A549 (cell line): ENCODE measurements at regions of chr12 and their contacts with region 1.

Region 1: GRCh38 chr12:110888256-110888991 is 32.0 kb downstream of the MYL2 start:
- DNase-seq: no peak
- ATAC-seq: no peak
- H3K4me3 ChIP-seq: no peak overlapping the region; the same call in 2 of the 3 replicates
- H3K27ac ChIP-seq: no peak overlapping the region
- H3K4me1 ChIP-seq: peaks cover 9% of the 10 kb centered on the region; the same call in 2 of the 3 replicates
- CTCF ChIP-seq: no peak; the same call in 2 of the 3 replicates
- EP300 ChIP-seq: no peak
- POLR2A ChIP-seq: no peak
- RAD21 ChIP-seq: peak in 1 of 2 experiments; percentile 5; a peak in 1 of 5 replicates

Region 2: GRCh38 chr12:110807640-110808039 is 80.8 kb before region 1 on chr12:
- CTCF ChIA-PET with region 1: no interaction called
- POLR2A ChIA-PET with region 1: no interaction called
- DNase-seq: no peak
- ATAC-seq: no peak
- H3K4me3 ChIP-seq: no peak overlapping the region
- H3K27ac ChIP-seq: no peak overlapping the region
- H3K4me1 ChIP-seq: no peaks in the 10 kb centered on the region
- CTCF ChIP-seq: no peak
- EP300 ChIP-seq: no peak
- POLR2A ChIP-seq: no peak
- RAD21 ChIP-seq: no peak

Region 3: DNA sequence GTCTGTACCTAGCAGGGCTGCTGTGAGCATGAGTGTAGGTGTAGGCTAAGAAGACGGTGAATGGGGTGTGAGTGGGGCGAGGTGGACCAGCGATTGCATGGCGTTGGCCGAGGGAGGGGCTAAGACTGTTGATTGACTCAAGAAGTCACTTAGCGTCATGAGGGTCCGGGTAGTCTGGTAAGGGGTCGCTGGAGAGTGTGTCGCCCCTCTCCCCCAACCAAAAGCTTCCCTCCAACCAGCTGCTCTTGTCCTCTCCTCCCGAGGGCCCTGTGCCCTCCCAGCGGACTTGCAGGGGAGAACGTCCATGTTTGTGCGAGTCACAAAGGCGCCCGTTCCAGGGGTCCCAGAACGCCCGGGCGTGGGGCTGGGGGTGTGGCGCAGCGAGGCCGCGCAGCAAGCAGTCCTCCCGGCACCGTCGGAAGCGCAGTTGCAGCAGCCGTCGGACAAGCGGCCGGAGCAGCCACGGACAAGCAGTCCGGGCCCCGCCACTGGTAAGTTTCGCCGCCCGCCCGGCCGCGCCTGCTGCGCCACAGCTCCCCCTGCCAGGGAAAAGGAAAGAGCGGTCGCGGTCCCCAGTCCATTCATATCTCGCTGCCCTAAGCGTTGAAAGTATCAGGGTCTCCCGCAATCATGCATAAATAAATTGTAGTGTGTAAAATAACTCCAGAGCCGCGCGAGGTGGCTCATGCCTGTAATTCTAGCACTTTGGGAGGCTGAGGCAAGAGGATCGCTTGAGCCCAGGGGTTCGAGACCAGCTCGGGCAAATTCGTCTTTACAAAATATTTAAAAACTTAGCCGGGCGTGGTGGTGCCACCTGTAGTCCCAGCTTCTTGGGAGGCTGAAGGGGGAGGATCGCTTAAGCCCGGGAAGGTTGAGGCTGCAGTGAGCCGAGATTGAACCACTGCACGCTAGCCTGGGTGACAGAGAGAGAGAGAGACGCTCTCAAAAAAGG is 41.5 kb before region 1 on chr12 and contains the start of gene CCDC63:
- CTCF ChIA-PET with region 1: interaction called, 13 read pairs
- POLR2A ChIA-PET with region 1: interaction called, 3 read pairs
- DNase-seq: peak; percentile 75 to 83
- ATAC-seq: peak; percentile 92 to 95
- H3K4me3 ChIP-seq: peak within 1 kb of the TSS; percentile 63
- H3K27ac ChIP-seq: peak within 1 kb of the TSS; percentile 76 to 90
- H3K4me1 ChIP-seq: no peaks in the 10 kb centered on the region
- CTCF ChIP-seq: peak; percentile 59
- EP300 ChIP-seq: no peak
- POLR2A ChIP-seq: no peak
- RAD21 ChIP-seq: peak; percentile 39 to 46
- polyA plus RNA-seq, gene CCDC63: 0.04 and 0.05 TPM in 2 replicates

Region 4: GRCh38 chr12:110860833-110861296 is 27.6 kb before region 1 on chr12:
- CTCF ChIA-PET with region 1: interaction called, 11 read pairs
- POLR2A ChIA-PET with region 1: no interaction called
- DNase-seq: no peak
- ATAC-seq: no peak
- H3K4me3 ChIP-seq: no peak overlapping the region
- H3K27ac ChIP-seq: no peak overlapping the region
- H3K4me1 ChIP-seq: no peaks in the 10 kb centered on the region
- CTCF ChIP-seq: no peak
- EP300 ChIP-seq: no peak
- POLR2A ChIP-seq: no peak
- RAD21 ChIP-seq: no peak

Region 5: GRCh38 chr12:110869026-110869425 is 19.4 kb before region 1 on chr12:
- CTCF ChIA-PET with region 1: interaction called, 10 read pairs
- POLR2A ChIA-PET with region 1: no interaction called
- DNase-seq: no peak
- ATAC-seq: peak; percentile 32 to 38; a peak in 2 of 6 replicates
- H3K4me3 ChIP-seq: no peak overlapping the region
- H3K27ac ChIP-seq: no peak overlapping the region
- H3K4me1 ChIP-seq: no peaks in the 10 kb centered on the region
- CTCF ChIP-seq: no peak
- EP300 ChIP-seq: no peak
- POLR2A ChIP-seq: no peak
- RAD21 ChIP-seq: no peak

Region 6: DNA sequence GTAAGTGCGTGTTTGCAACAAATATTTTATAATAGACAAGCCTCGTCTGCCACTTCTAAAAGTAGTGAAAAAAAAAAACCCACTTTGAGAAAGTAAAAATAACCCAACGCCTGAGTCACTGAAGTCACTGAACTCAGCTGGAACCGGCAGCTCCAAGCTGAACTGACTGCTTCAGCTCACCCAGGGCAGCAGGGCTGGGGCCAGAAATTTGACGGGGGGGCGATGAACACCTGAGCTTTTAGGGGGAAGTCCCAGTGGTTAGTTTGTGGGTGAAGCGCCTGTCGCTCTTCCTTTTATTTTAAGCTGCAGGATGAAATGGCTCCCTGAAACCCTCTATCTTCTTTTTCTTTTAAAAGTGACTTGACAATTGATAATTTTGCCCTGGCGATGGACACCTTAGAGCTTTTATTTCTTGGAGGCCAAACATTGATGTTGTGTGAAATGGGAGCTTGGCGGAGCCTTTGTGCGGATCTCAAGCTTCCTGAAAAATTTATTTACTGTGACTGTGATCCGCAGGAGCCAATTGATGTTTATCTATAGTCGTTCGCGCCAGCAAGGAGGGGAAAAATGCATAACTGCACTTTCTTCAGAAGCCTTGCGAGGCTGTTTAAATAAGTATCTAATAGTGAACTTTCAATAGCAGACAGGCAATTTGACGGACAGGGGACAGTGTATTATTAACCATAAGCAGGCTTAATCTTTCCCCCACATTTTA is 205.2 kb after region 1 on chr12:
- CTCF ChIA-PET with region 1: no interaction called
- POLR2A ChIA-PET with region 1: no interaction called
- DNase-seq: no peak
- ATAC-seq: no peak
- H3K4me3 ChIP-seq: no peak overlapping the region
- H3K27ac ChIP-seq: no peak overlapping the region
- H3K4me1 ChIP-seq: no peaks in the 10 kb centered on the region
- CTCF ChIP-seq: no peak
- EP300 ChIP-seq: no peak
- POLR2A ChIP-seq: no peak
- RAD21 ChIP-seq: no peak